ENCODE measurements at regions of chr17 and their contacts with region 1.

Region 1: DNA sequence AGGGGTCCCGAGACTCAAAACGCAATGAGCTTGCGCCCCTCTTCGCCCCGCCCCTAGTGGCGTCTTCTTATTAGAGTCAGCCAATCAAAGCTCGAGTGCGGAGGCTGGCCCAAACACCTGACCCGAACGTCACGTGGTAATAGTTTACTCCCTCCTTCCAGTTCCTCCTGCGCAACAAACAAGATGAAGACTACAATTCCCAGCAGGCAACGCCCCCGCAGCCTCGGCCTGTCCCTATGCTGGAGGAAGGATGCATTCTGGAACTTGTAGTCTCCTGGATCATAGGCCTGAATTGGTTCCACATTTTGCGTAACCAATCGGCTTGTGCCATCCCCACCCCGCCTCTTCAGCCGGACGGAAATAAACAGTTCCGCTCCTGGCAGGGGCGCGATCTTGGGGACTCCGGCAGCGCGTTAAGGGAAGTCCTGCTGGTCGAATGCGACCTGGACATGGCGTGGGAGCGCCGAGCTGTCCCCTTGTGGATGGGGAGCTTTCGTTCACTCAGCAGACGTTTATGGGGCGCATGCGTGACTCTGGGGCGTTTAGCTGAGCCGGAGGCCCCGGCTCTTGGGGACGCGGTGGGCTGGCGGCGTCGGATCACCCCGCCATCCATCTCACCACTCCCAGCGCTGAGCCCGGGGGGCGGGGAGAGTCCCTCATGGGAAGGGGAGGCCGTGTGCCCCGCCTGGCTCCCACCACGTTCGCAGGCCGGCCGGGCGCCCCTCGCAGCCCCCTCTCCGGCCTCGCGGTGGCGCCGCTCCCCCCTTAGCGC is at the start of gene WBP2:
- DNase-seq: peak; percentile 96 to 100 (median 99)
- H3K4me3 ChIP-seq: peak within 1 kb of the TSS; percentile 74 to 100 (median 94)
- H3K27ac ChIP-seq: peak within 1 kb of the TSS; percentile 95 to 100 (median 99)
- H3K27me3 ChIP-seq: no peaks in the 10 kb centered on the region
- CTCF ChIP-seq: peak in 48 of 56 donors; percentile 14 to 69 (median 46)
- total RNA-seq, gene WBP2: 311 to 523 (median 421) TPM

Region 2: DNA sequence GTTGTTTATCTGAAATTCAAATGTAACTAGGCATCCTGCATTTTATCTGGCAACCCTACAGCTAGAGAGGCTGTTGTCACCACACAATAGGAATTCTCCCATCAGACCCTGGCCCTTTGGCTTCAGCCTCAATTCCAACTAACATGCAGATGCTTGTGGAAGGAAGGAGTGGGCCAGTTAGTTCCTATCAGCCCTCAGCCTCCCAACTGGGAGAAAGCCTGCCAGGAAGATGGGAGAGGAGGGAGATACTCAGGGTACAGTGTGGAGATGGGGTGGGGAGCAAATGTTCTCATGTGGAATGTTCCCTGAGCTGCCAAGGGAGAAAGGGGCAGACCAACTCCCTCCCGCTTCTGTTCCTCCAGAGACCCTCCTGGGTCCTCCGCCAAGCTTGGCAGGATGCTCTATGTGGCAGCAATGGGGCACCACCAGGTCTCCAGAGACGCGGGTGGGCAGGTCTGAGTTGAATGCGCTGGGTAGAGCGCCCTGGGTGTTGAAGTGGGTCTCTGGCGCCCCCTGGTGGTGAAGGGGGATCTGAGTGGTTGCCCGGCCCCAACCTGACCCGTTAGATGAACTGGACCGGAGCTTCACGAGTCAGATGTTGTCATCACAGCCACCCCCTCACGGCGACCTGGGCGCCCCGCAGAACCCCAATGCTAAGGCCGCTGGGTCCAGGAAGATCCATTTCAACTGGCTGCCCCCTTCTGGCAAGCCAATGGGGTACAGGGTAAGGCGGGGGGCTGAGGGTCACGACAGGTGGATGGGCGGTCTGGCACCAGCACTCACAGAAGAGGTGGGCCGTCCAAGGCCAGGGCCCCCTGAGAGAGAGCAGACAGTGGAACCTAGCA is 105.7 kb before region 1 on chr17:
- intact Hi-C with region 1: no loop called
- DNase-seq: peak; percentile 83 to 94 (median 90)
- H3K4me3 ChIP-seq: peak overlapping the region in 20 of 59 donors; percentile 3 to 41 (median 24)
- H3K27ac ChIP-seq: peak overlapping the region in 45 of 59 donors; percentile 4 to 84 (median 43)
- H3K27me3 ChIP-seq: no peaks in the 10 kb centered on the region
- CTCF ChIP-seq: peak; percentile 85 to 99 (median 96)

Region 3: DNA sequence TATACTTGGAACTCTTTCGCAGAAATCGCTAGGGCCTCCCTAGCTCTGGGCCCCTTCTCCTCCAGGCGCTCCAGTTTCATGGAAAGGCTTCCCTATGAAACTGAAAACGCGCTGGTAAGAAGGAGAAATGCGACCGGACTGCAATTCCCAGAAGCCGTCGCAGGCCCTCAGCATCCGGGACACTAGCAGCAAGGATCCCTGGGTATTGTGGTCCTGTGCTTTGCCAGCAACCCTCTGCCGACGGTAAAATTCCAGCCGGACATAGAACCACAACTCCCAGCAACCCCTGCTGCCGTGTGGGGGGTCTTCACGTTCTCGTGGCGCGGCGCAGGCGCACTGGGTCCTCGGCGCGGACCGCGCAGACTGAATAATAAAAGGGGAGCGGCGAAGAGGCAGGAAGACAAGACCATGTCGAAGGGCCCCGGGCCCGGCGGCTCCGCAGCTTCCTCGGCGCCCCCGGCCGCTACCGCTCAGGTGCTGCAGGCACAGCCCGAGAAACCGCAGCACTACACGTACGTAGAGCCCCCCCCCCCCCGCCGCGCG is 71.0 kb before region 1 on chr17 and contains the start of gene UNK:
- intact Hi-C with region 1: loop called (anchors 2 kb)
- DNase-seq: peak; percentile 97 to 99 (median 98)
- H3K4me3 ChIP-seq: peak within 1 kb of the TSS; percentile 55 to 94 (median 77)
- H3K27ac ChIP-seq: peak within 1 kb of the TSS; percentile 95 to 100 (median 100)
- H3K27me3 ChIP-seq: no peaks in the 10 kb centered on the region
- CTCF ChIP-seq: peak in 31 of 56 donors; percentile 2 to 44 (median 22)
- total RNA-seq, gene UNK: 20.6 to 51.6 (median 29.4) TPM

Region 4: DNA sequence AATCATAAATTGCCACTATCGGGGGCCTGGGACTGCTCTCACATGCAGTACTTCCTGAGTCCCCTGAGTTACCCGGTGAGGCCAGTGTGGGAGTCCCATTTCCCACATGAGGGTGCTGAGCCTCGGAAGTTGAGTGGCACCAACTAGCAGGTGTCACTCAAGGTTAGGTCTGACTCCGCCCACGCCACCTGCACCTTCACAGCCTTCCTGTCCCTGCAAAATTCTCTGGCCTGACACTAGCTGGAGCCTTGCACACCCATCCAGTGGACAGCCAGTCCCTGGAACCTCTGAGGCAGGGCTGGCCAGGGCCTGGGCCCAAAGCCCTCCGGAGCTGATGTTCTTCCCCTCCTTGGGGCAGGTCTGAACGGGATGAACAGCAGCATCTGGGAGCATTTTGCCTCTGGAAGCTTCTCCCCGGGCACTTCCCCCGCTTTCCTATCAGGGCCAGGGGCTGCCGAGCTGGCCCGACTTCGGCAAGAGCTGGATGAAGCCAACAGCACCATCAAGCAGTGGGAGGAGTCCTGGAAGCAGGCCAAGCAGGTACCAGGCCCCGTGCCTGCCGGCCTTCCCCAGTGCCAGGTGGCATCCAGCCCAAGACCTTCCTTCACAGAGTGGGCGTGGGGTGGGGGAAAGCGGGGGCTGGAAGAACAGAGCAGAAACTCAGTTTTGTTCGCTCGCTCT is 33.2 kb before region 1 on chr17:
- intact Hi-C with region 1: no loop called
- DNase-seq: peak in 2 of 10 donors; percentile 24 to 40
- H3K4me3 ChIP-seq: no peak overlapping the region
- H3K27ac ChIP-seq: peak overlapping the region in 50 of 59 donors; percentile 7 to 81 (median 54)
- H3K27me3 ChIP-seq: no peaks in the 10 kb centered on the region
- CTCF ChIP-seq: no peak

Region 5: GRCh38 chr17:75877752-75878173 is 22.3 kb after region 1 on chr17:
- intact Hi-C with region 1: loop called in 1 of 2 experiments (anchors 1 kb)
- DNase-seq: peak in 7 of 10 donors; percentile 58 to 82 (median 71)
- H3K4me3 ChIP-seq: peak overlapping the region; percentile 49 to 82 (median 71)
- H3K27ac ChIP-seq: peak overlapping the region; percentile 62 to 99 (median 94)
- H3K27me3 ChIP-seq: no peaks in the 10 kb centered on the region
- CTCF ChIP-seq: peak in 27 of 56 donors; percentile 1 to 52 (median 26)